Posterior cingulate gyrus (tissue), 11 donors: ENCODE measurements at regions of chr16 and their contacts with region 1.

Region 1: GRCh38 chr16:67104061-67104460 is 5.7 kb upstream of the PHAF1 start:
- DNase-seq: peak in 1 of 10 donors; percentile 27

Region 2: GRCh38 chr16:66977341-66978113 is 126.5 kb before region 1 on chr16:
- intact Hi-C with region 1: loop called (anchors 1 kb)
- DNase-seq: peak; percentile 80 to 99 (median 94)